HEK293T (cell line): ENCODE measurements at regions of chr14 and their contacts with region 1.

Region 1: GRCh38 chr14:101770183-101770582 is 8.7 kb downstream of the PPP2R5C start:
- DNase-seq: no peak

Region 2: GRCh38 chr14:101721951-101722661 is 48.1 kb before region 1 on chr14:
- CTCF ChIA-PET with region 1: no interaction called
- POLR2A ChIA-PET with region 1: no interaction called
- DNase-seq: no peak

Region 3: GRCh38 chr14:101843665-101844064 is 73.5 kb after region 1 on chr14:
- CTCF ChIA-PET with region 1: interaction called, 11 read pairs
- POLR2A ChIA-PET with region 1: no interaction called
- DNase-seq: no peak

Region 4: DNA sequence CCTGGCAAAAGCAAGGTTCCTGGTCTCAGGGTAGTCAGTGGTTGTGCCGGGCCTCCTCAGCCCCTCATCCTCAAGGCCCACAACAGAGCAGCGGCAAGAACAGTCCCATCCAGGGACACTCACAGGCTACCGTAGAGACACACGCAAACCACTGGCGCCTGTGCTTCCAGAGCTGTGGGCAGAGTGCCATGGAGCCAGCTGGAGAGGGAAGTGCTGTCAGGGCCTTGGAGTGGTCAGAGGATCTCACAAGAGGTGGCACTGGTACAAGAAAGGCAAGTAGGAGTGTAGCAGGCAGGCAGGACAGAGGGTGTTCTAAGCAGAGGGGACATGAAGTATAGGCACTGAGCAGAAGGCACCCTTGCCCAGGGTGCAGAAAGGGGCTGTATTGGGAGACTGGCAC is 704.8 kb after region 1 on chr14:
- CTCF ChIA-PET with region 1: no interaction called
- POLR2A ChIA-PET with region 1: no interaction called
- DNase-seq: no peak